CD8-positive, alpha-beta T cell (primary cell): ENCODE measurements at regions of chr11 and their contacts with region 1.

Region 1: GRCh38 chr11:47426061-47426956 is at the start of gene PSMC3:
- DNase-seq: peak; percentile 96 to 99 (median 98)
- ATAC-seq: peak; percentile 98
- H3K4me3 ChIP-seq: peak within 1 kb of the TSS; percentile 68 to 98
- H3K4me3 Mint-ChIP-seq: peak within 1 kb of the TSS; percentile 100
- H3K27ac ChIP-seq: peak within 1 kb of the TSS; percentile 77 to 81
- H3K27ac Mint-ChIP-seq: peak within 1 kb of the TSS; percentile 98
- H3K4me1 ChIP-seq: peaks cover 14% of the 10 kb centered on the region
- H3K4me1 Mint-ChIP-seq: peaks cover 28% of the 10 kb centered on the region
- H3K27me3 ChIP-seq: no peaks in the 10 kb centered on the region
- H3K27me3 Mint-ChIP-seq: no peaks in the 10 kb centered on the region
- CTCF ChIP-seq: no peak
- total RNA-seq, gene PSMC3: 58.1 to 63.4 TPM

Region 2: GRCh38 chr11:46121724-46122477 is 1304.4 kb before region 1 on chr11:
- CTCF ChIA-PET with region 1: no interaction called
- POLR2A ChIA-PET with region 1: no interaction called
- intact Hi-C with region 1: loop called in 1 of 2 experiments (anchors 10 kb)
- DNase-seq: peak; percentile 50 to 92 (median 73)
- ATAC-seq: peak; percentile 54
- H3K4me3 ChIP-seq: peak overlapping the region; percentile 58 to 63
- H3K4me3 Mint-ChIP-seq: peak overlapping the region; percentile 88
- H3K27ac ChIP-seq: peak overlapping the region; percentile 1 to 26
- H3K27ac Mint-ChIP-seq: peak overlapping the region; percentile 96
- H3K4me1 ChIP-seq: peaks cover 30% of the 10 kb centered on the region
- H3K4me1 Mint-ChIP-seq: peaks cover 33% of the 10 kb centered on the region
- H3K27me3 ChIP-seq: no peaks in the 10 kb centered on the region
- H3K27me3 Mint-ChIP-seq: no peaks in the 10 kb centered on the region
- CTCF ChIP-seq: no peak

Region 3: DNA sequence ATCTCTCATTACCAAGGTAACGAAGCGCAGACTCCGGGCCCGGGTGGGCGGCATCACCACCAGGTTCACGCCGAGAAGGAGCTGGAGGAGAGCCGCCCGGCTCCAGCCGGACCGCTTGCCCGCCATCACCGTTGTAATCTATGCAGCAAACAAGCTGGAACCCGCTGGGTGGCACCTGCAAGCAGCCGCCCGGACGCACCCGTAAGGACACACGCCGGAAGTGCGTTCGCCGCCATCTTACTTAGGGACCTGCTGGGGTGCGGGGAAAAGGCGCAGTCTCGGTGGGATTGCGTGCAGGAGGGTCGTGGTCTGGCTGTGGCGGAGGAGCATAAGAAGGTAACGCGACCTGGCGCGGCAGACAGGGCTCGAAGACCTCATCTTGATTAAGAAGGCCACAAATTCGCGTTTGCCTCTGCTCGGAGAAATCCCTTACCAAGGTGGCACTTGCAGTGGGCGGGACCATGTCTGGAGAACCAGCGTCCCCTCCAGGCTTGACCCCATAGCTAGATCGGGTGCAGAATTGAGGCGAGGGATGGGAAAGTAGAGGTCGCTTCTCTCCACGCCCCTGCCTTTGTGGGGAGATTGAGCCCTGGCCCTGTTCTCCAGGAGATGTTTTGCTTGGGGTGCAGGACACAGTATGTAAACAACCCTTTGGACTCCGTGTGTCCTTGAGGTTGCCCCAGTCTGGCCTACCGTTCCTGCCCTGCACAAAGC is 177.5 kb before region 1 on chr11 and contains the start of gene ACP2:
- CTCF ChIA-PET with region 1: no interaction called
- POLR2A ChIA-PET with region 1: interaction called, 3 read pairs
- intact Hi-C with region 1: loop called in 1 of 2 experiments (anchors 5 kb)
- DNase-seq: peak; percentile 70 to 93 (median 85)
- ATAC-seq: peak; percentile 97
- H3K4me3 ChIP-seq: peak within 1 kb of the TSS; percentile 81 to 90
- H3K4me3 Mint-ChIP-seq: peak within 1 kb of the TSS; percentile 100
- H3K27ac ChIP-seq: peak within 1 kb of the TSS; percentile 63 to 83
- H3K27ac Mint-ChIP-seq: peak within 1 kb of the TSS; percentile 100
- H3K4me1 ChIP-seq: peaks cover 17% of the 10 kb centered on the region
- H3K4me1 Mint-ChIP-seq: peaks cover 32% of the 10 kb centered on the region
- H3K27me3 ChIP-seq: no peaks in the 10 kb centered on the region
- H3K27me3 Mint-ChIP-seq: no peaks in the 10 kb centered on the region
- CTCF ChIP-seq: no peak
- total RNA-seq, gene ACP2: 18.3 to 22.6 TPM

Region 4: DNA sequence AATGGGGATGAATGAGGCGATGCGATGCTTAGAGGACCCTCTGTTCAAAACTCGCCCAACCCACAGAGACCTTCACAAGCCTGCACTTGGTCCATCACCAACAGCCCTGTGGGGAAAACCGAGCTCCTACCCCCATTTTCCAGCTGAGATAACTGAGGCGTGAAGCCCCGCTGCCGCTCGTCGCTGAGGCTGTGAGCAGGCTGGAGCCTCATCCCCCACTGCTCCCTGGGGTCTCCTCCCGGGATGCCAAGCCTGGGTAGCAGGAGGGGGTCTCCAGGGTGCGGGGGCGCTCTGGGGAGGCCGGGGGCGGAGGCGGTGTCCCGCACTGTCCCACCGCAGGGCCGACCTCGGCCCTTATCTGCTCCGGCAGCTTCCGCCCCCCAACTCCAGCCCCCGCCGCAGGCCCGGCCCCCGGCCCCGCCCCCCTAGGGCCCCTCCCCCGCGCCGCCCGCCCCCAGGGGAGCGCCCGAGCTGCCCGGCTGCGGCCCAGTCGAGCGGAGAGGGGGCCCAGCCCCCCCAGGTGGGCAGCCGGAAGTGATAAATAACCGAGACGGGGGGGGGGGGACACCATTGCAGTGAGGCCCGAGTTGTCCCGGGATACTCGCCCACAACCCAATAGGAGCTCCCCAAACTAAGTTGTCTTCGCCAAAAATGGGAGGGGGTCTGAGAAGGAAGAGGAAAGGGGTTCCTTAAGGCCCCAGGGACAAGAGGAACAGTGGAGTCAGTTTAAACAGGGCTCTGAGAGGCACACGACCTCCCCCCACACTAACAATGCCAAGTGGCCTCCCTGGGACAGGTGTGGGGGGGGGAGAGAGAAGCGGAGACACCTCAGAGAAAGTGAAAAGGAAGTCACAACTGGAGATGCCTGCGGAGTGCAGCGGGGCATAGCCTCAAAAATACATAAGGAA is 26.2 kb before region 1 on chr11:
- CTCF ChIA-PET with region 1: no interaction called
- POLR2A ChIA-PET with region 1: no interaction called
- intact Hi-C with region 1: loop called in 1 of 2 experiments (anchors 2 kb)
- DNase-seq: peak in 8 of 9 experiments; percentile 29 to 74 (median 42)
- ATAC-seq: peak; percentile 88
- H3K4me3 ChIP-seq: peak overlapping the region; percentile 63 to 82
- H3K4me3 Mint-ChIP-seq: peak overlapping the region; percentile 81
- H3K27ac ChIP-seq: peak overlapping the region; percentile 56 to 60
- H3K27ac Mint-ChIP-seq: peak overlapping the region; percentile 71
- H3K4me1 ChIP-seq: peaks cover 28% of the 10 kb centered on the region
- H3K4me1 Mint-ChIP-seq: peaks cover 34% of the 10 kb centered on the region
- H3K27me3 ChIP-seq: no peaks in the 10 kb centered on the region
- H3K27me3 Mint-ChIP-seq: no peaks in the 10 kb centered on the region
- CTCF ChIP-seq: no peak

Region 5: DNA sequence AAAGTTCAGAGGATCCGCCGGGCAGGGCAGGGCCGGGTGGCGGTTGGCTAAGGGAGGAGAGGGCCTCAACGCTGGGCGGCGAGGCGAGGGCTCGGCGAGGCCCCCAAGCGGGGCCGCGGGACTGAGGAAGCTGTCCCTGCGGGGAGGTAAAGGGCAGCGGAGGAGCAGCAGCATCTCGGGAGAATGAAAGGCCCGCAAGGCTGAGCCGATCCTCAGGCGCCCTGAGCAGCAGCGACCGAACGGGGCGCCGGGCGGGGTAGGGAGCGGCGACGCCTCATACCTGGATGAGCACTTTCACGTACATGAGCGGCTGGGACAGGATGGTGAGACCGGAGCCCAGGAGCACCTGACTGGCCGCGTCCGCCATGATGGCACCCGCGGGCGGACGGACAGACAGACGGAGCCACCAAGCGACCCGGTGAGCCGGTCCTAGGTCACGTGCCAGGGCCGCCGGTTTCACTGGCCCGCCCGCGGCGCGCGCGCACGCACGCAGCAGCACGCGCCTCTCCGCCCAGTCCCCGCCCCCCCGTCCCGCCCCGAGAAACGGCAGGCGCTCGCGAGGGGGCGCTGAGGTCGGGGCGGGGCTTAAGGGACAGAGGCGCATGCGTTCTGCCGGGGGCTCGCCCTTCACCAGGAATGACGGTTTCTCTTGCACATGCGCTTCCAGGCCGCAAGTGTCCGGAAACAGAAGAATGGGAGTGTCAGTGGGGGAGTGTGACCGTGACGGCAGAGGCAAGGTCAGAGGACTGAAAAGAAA is 216.0 kb after region 1 on chr11 and contains the start of gene MTCH2:
- CTCF ChIA-PET with region 1: no interaction called
- POLR2A ChIA-PET with region 1: no interaction called
- intact Hi-C with region 1: loop called in 1 of 2 experiments (anchors 2 kb)
- DNase-seq: peak; percentile 91 to 98 (median 95)
- ATAC-seq: peak; percentile 95
- H3K4me3 ChIP-seq: peak within 1 kb of the TSS; percentile 42 to 91
- H3K4me3 Mint-ChIP-seq: peak within 1 kb of the TSS; percentile 96
- H3K27ac ChIP-seq: peak within 1 kb of the TSS; percentile 55 to 96
- H3K27ac Mint-ChIP-seq: peak within 1 kb of the TSS; percentile 97
- H3K4me1 ChIP-seq: peaks cover 18% of the 10 kb centered on the region
- H3K4me1 Mint-ChIP-seq: peaks cover 32% of the 10 kb centered on the region
- H3K27me3 ChIP-seq: no peaks in the 10 kb centered on the region
- H3K27me3 Mint-ChIP-seq: no peaks in the 10 kb centered on the region
- CTCF ChIP-seq: no peak
- total RNA-seq, gene MTCH2: 16.4 to 19.5 TPM